Activated CD4-positive, alpha-beta T cell treated with anti-CD3 and anti-CD28 coated beads, Interleukin-2, amount 10 ng/mL, durations not matched to agents 7 days and 5 days (primary cell): ENCODE measurements at regions of chr3 and their contacts with region 1.

Region 1: GRCh38 chr3:187086831-187087230 is 52.5 kb downstream of the RPL39L start:
- DNase-seq: no peak
- H3K4me3 Mint-ChIP-seq: no peak overlapping the region
- H3K27ac Mint-ChIP-seq: no peak overlapping the region
- H3K4me1 Mint-ChIP-seq: peaks cover 19% of the 10 kb centered on the region
- H3K27me3 Mint-ChIP-seq: peaks cover 3% of the 10 kb centered on the region

Region 2: GRCh38 chr3:185912929-185913901 is 1173.6 kb before region 1 on chr3:
- CTCF ChIA-PET with region 1: no interaction called
- POLR2A ChIA-PET with region 1: interaction called, 14 read pairs
- DNase-seq: no peak
- H3K4me3 Mint-ChIP-seq: no peak overlapping the region
- H3K27ac Mint-ChIP-seq: no peak overlapping the region
- H3K4me1 Mint-ChIP-seq: no peaks in the 10 kb centered on the region
- H3K27me3 Mint-ChIP-seq: no peaks in the 10 kb centered on the region